ENCODE measurements at regions of chr11 and their contacts with region 1.

Region 1: DNA sequence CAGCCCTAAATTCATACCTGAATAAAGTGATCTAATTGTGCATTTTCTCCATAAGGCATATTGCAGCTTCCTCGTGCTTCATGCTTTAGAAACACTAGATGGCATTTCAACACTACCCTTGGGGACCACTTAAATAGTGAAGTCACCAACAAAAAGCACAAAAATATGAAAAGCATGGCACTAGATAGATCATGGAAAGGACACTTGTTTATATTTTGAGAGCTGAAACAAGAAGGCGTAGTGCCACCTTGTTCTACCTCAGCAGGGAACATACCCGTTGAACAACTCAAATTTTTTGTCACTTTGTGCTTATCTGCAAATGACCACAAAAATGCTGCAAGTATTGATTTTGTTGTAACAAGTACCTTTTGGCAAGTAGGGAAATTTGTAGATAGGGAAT is 8.6 kb downstream of the TBCEL start:
- DNase-seq: no peak
- ATAC-seq: 0 out of 3 replicates have a peak, but pooled peaks have one; percentile 17
- H3K4me3 ChIP-seq: no peak overlapping the region
- H3K27ac ChIP-seq: no peak overlapping the region
- H3K4me1 ChIP-seq: peaks cover 14% of the 10 kb centered on the region
- H3K27me3 ChIP-seq: no peaks in the 10 kb centered on the region
- CTCF ChIP-seq: peak in 2 of 3 experiments; percentile 27 to 39; a peak in 3 of 6 replicates
- EP300 ChIP-seq: no peak
- POLR2A ChIP-seq: no peak
- RAD21 ChIP-seq: peak; percentile 63

Region 2: DNA sequence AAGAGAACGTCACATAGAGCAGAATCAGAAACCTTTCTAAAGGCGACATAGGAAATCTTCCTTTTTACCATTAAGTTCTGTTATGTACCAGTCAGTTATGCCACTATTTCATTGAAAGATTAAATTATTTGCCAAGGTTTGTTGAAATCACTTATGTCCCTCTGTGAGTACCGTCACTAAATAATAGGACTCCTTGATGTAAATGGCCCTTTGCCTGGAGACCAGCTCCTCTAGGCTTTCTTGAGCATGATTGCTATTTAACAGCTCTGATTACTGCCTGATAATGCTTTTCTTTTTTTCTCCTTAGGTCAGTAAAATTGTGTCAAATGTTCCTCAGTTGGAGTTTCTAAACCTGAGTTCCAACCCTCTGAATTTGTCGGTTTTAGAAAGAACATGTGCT is 20.7 kb after region 1 on chr11:
- CTCF ChIA-PET with region 1: interaction called, 5 read pairs
- POLR2A ChIA-PET with region 1: no interaction called
- RAD21 ChIA-PET with region 1: no interaction called
- SMC1A ChIA-PET with region 1: interaction called, 13 read pairs
- in situ Hi-C with region 1: no loop called
- intact Hi-C with region 1: no loop called
- DNase-seq: no peak
- ATAC-seq: no peak
- H3K4me3 ChIP-seq: no peak overlapping the region
- H3K27ac ChIP-seq: no peak overlapping the region
- H3K4me1 ChIP-seq: peaks cover under 1% of the 10 kb centered on the region
- H3K27me3 ChIP-seq: no peaks in the 10 kb centered on the region
- CTCF ChIP-seq: no peak
- EP300 ChIP-seq: no peak
- POLR2A ChIP-seq: no peak
- RAD21 ChIP-seq: no peak

Region 3: GRCh38 chr11:121112498-121113455 is 80.2 kb after region 1 on chr11:
- CTCF ChIA-PET with region 1: interaction called, 3 read pairs
- POLR2A ChIA-PET with region 1: no interaction called
- RAD21 ChIA-PET with region 1: no interaction called
- SMC1A ChIA-PET with region 1: no interaction called
- in situ Hi-C with region 1: no loop called
- intact Hi-C with region 1: loop called (anchors 2 kb)
- DNase-seq: no peak
- ATAC-seq: peak; percentile 95
- H3K4me3 ChIP-seq: no peak overlapping the region
- H3K27ac ChIP-seq: no peak overlapping the region
- H3K4me1 ChIP-seq: no peaks in the 10 kb centered on the region
- H3K27me3 ChIP-seq: peaks cover 0 to 12% of the 10 kb centered on the region in 2 experiments; a peak in 3 of 4 replicates
- CTCF ChIP-seq: peak; percentile 56 to 83 (median 66)
- EP300 ChIP-seq: no peak
- POLR2A ChIP-seq: no peak
- RAD21 ChIP-seq: peak; percentile 82

Measured in GM12878 (cell line).